Activated CD8-positive, alpha-beta memory T cell treated with anti-CD3 and anti-CD28 coated beads, Interleukin-2, amount 10 ng/mL, durations not matched to agents 7 days and 5 days (primary cell): ENCODE measurements at regions of chr19 and their contacts with region 1.

Region 1: DNA sequence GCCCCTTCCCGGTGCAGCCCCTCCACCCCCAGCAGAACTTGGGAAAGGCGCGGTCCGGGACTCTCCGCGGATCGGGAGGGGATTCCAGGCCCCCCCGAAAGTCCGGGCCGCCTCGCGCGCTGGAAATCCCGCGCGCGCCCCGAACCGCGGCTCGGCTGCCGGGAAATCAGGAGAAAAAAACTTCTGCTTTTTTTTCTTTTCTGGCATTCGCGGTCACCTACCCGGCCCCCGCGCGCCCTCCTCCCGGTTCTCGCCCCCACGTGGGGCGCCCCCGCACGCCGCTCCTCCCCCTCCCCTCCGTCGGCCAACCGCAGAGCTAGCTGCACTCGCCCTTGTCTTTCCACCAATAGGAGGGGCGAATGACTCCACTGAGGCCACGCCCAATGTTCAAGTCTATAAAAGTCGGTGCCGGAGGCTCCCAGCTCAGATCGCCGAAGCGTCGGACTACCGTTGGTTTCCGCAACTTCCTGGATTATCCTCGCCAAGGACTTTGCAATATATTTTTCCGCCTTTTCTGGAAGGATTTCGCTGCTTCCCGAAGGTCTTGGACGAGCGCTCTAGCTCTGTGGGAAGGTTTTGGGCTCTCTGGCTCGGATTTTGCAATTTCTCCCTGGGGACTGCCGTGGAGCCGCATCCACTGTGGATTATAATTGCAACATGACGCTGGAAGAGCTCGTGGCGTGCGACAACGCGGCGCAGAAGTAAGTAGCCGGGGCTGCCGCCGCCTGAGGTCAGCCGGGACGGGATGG is at the start of gene GADD45B:
- DNase-seq: peak; percentile 97
- ATAC-seq: peak; percentile 57
- H3K4me3 Mint-ChIP-seq: peak within 1 kb of the TSS; percentile 100
- H3K27ac Mint-ChIP-seq: peak within 1 kb of the TSS; percentile 91
- H3K4me1 Mint-ChIP-seq: peaks cover 21% of the 10 kb centered on the region
- H3K27me3 Mint-ChIP-seq: peaks cover 3% of the 10 kb centered on the region
- total RNA-seq, gene GADD45B: 63.4 to 79.4 TPM

Region 2: GRCh38 chr19:2371656-2372055 is 104.2 kb before region 1 on chr19:
- CTCF ChIA-PET with region 1: no interaction called
- DNase-seq: no peak
- ATAC-seq: no peak
- H3K4me3 Mint-ChIP-seq: no peak overlapping the region
- H3K27ac Mint-ChIP-seq: no peak overlapping the region
- H3K4me1 Mint-ChIP-seq: peaks cover 4% of the 10 kb centered on the region
- H3K27me3 Mint-ChIP-seq: peaks cover 3% of the 10 kb centered on the region

Region 3: GRCh38 chr19:2412449-2412848 is 63.4 kb before region 1 on chr19:
- CTCF ChIA-PET with region 1: no interaction called
- DNase-seq: no peak
- ATAC-seq: no peak
- H3K4me3 Mint-ChIP-seq: no peak overlapping the region
- H3K27ac Mint-ChIP-seq: no peak overlapping the region
- H3K4me1 Mint-ChIP-seq: peaks cover 2% of the 10 kb centered on the region
- H3K27me3 Mint-ChIP-seq: no peaks in the 10 kb centered on the region

Region 4: GRCh38 chr19:2494444-2495129 is 18.7 kb after region 1 on chr19:
- CTCF ChIA-PET with region 1: interaction called, 14 read pairs
- DNase-seq: peak; percentile 70
- ATAC-seq: peak; percentile 84
- H3K4me3 Mint-ChIP-seq: peak overlapping the region; percentile 70
- H3K27ac Mint-ChIP-seq: no peak overlapping the region
- H3K4me1 Mint-ChIP-seq: peaks cover 21% of the 10 kb centered on the region
- H3K27me3 Mint-ChIP-seq: peaks cover 53% of the 10 kb centered on the region

Region 5: GRCh38 chr19:2524838-2525723 is 49.2 kb after region 1 on chr19:
- CTCF ChIA-PET with region 1: no interaction called
- DNase-seq: no peak
- ATAC-seq: no peak
- H3K4me3 Mint-ChIP-seq: no peak overlapping the region
- H3K27ac Mint-ChIP-seq: no peak overlapping the region
- H3K4me1 Mint-ChIP-seq: no peaks in the 10 kb centered on the region
- H3K27me3 Mint-ChIP-seq: no peaks in the 10 kb centered on the region

Region 6: DNA sequence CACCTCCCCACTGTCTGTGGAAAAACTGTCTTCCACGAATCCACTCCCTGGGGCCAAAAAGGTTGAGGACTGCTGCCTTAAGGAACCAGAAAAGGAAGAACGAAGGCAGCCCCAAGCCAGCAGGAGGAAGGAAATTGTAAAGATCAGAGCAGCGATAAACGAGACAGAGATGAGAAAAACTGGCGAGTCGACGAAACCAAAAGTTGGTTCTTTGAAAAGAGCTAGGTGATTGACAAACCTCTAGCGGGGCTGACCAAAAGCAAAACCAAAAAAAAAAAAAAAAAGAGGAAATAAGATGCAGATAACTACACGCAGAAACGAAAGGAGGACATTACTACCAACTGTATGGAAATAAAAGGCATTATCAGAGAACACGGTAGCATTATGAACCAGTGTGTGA is 77.0 kb after region 1 on chr19:
- CTCF ChIA-PET with region 1: interaction called, 36 read pairs
- DNase-seq: peak; percentile 83
- ATAC-seq: peak; percentile 90
- H3K4me3 Mint-ChIP-seq: peak overlapping the region; percentile 66
- H3K27ac Mint-ChIP-seq: peak overlapping the region; percentile 93
- H3K4me1 Mint-ChIP-seq: peaks cover 31% of the 10 kb centered on the region
- H3K27me3 Mint-ChIP-seq: no peaks in the 10 kb centered on the region

Region 7: GRCh38 chr19:2578901-2579677 is 103.2 kb after region 1 on chr19:
- CTCF ChIA-PET with region 1: interaction called, 58 read pairs
- DNase-seq: peak; percentile 83
- ATAC-seq: peak; percentile 79
- H3K4me3 Mint-ChIP-seq: no peak overlapping the region
- H3K27ac Mint-ChIP-seq: no peak overlapping the region
- H3K4me1 Mint-ChIP-seq: peaks cover 2% of the 10 kb centered on the region
- H3K27me3 Mint-ChIP-seq: peaks cover 23% of the 10 kb centered on the region

Region 8: GRCh38 chr19:2618611-2619010 is 142.7 kb after region 1 on chr19:
- CTCF ChIA-PET with region 1: interaction called, 257 read pairs
- DNase-seq: peak; percentile 78
- ATAC-seq: no peak
- H3K4me3 Mint-ChIP-seq: peak overlapping the region; percentile 47
- H3K27ac Mint-ChIP-seq: peak overlapping the region; percentile 100
- H3K4me1 Mint-ChIP-seq: peaks cover 71% of the 10 kb centered on the region
- H3K27me3 Mint-ChIP-seq: no peaks in the 10 kb centered on the region